ENCODE measurements at regions of chr21 and their contacts with region 1.

Region 1: GRCh38 chr21:34100790-34101189 is 27.4 kb downstream of the MRPS6 start:
- DNase-seq: no peak
- H3K4me3 Mint-ChIP-seq: no peak overlapping the region
- H3K27ac Mint-ChIP-seq: peak overlapping the region; percentile 6
- H3K4me1 Mint-ChIP-seq: peaks cover 89% of the 10 kb centered on the region
- H3K27me3 Mint-ChIP-seq: no peaks in the 10 kb centered on the region

Region 2: DNA sequence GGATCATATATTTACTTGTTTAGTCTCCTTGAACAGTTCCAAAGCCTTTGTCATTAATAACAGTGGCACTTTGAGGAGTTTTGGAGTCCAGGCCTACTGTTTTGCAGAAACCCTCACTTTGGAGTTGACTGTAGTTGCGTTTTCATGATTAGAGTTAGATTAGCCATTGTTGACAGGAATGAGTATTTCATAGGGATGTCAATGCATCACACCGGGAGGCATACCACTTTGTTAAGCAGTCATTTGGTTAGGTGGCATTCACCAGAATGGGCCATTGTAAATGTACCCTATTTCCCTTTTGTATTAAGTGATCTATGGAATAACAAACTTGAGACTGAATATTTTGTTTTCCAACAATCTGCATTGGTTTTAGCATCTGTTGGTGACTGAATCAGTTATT is 15.7 kb before region 1 on chr21:
- CTCF ChIA-PET with region 1: interaction called, 3 read pairs
- POLR2A ChIA-PET with region 1: interaction called, 3 read pairs
- intact Hi-C with region 1: loop called (anchors 2 kb)
- DNase-seq: no peak
- H3K4me3 Mint-ChIP-seq: no peak overlapping the region
- H3K27ac Mint-ChIP-seq: no peak overlapping the region
- H3K4me1 Mint-ChIP-seq: peaks cover 60% of the 10 kb centered on the region
- H3K27me3 Mint-ChIP-seq: no peaks in the 10 kb centered on the region

Measured in activated CD4-positive, alpha-beta memory T cell treated with anti-CD3 and anti-CD28 coated beads for 36 hours (primary cell).